Mammary epithelial cell (primary cell): ENCODE measurements at regions of chr11 and their contacts with region 1.

Region 1: DNA sequence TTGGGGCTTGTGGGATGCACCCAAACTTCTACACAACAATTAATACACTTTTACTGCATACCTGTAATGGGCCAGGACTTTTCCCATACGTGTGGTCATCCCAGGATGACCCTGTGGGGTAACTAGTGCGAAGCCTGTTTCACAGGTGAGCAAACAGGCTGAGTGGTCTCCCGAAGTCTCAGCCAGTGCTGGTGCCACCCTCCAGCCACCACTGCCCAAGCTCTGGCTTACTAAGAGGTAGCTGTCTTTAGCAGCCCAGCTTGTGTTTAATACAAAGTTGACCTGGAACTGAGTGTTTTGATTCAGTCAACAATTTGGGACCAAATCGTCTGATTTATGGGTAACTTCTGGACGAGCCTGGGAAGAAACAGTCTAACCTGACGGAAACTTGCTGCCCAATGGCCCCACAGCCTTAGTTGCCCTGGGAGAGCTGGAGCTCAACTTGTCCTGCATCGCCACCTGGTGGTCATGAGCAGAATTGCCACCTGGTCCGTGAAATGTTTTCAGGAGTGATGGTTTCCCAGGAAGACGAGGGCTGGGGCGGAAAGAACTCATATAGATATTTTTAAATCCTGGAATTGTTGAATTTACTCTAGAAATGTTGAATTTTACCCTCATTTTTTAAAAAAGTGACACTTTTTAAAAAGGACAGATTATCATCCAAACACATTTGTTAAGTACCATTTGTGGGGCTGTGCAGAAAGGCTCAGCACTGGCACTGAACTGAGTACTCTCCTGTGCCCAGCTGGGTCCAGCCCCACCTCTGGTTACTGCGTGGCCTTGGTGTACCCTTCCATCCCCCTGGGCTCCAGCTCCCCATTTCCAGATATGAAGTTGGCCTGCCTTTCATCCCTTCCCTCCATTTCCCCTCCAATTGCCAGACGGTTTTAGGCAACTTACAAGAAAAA is 95.5 kb upstream of the PARVA start:
- DNase-seq: peak; percentile 67
- H3K4me3 ChIP-seq: no peak overlapping the region
- H3K27ac ChIP-seq: no peak overlapping the region
- H3K4me1 ChIP-seq: peaks cover 44% of the 10 kb centered on the region
- H3K27me3 ChIP-seq: no peaks in the 10 kb centered on the region
- CTCF ChIP-seq: peak; percentile 93 to 96

Region 2: DNA sequence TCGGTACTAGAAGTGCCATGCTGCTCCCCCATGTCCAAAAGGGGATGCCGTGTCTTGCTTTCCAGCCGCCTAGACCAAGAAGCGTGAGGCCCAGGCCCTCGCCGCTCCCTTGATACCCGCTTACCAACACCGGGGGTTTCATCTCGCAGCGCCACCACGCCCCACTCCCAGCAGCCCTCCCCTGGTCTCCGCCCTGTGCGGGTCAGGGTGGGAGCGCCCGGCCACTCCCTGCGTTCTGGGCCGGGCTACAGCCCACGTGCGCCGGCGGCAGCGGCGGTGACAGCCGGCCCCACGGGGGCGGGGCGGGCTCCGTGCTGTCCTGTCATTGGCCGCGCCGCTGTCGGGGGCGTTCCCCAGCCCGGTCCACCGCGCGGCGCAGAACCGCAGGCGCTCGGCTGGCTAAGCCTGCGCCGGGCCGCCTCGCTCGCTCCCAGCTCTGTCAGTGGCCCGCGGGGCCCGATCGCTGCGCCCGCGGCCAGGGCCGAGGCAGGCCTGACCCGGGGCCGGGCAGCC is 171.6 kb before region 1 on chr11 and contains the start of gene MICAL2:
- CTCF ChIA-PET with region 1: interaction called, 5 read pairs
- dilution Hi-C with region 1: no loop called
- in situ Hi-C with region 1: no loop called
- intact Hi-C with region 1: loop called (anchors 5 kb)
- DNase-seq: peak; percentile 95
- H3K4me3 ChIP-seq: peak within 1 kb of the TSS; percentile 60 to 81 (median 76)
- H3K27ac ChIP-seq: peak within 1 kb of the TSS; percentile 95
- H3K4me1 ChIP-seq: peaks cover 37% of the 10 kb centered on the region
- H3K27me3 ChIP-seq: no peaks in the 10 kb centered on the region
- CTCF ChIP-seq: no peak
- total RNA-seq, gene MICAL2: 163 to 339 TPM